Stomach (tissue), 19 donors: ENCODE measurements at regions of chr6 and their contacts with region 1.

Region 1: DNA sequence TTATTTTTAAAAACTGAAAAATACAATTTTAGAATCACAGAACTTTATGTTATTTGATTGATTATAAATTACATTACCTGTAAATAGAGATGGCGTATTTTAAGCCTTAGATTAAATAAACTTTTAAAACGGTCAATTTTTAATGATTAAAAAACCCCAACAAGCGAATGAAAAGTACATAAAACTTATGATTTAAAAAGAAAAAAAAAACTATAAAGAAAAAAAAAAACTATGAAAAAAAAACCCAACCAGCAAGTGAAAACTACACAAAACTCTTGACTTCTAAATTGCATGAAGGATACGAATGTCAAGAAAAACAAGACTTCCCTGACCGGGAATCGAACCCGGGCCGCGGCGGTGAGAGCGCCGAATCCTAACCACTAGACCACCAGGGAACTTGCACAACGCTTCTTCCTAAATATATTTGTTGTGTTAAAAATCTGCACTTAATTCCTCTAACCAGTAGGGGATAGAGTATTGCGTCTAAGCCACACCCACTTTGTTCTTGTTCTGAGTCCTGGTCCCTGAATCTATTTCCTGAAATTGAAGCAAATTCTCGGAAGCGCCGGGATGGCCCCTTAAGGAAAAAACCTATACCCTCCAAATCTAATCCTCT is 10.7 kb upstream of the NCOA7 start:
- DNase-seq: peak; percentile 85 to 96
- H3K4me3 ChIP-seq: peak overlapping the region; percentile 42 to 59 (median 57)
- H3K27ac ChIP-seq: peak overlapping the region; percentile 90 to 97 (median 95)
- H3K4me1 ChIP-seq: peaks cover 0 to 14% (median 4%) of the 10 kb centered on the region in 4 donors
- H3K27me3 ChIP-seq: no peaks in the 10 kb centered on the region
- CTCF ChIP-seq: peak in 4 of 7 experiments; percentile 19 to 53 (median 44)
- EP300 ChIP-seq: no peak
- POLR2A ChIP-seq: no peak

Region 2: GRCh38 chr6:125611573-125612344 is 168.3 kb before region 1 on chr6:
- intact Hi-C with region 1: no loop called
- DNase-seq: peak in 1 of 2 donors; percentile 60
- H3K4me3 ChIP-seq: peak overlapping the region in 3 of 4 donors; percentile 3 to 12 (median 11)
- H3K27ac ChIP-seq: no peak overlapping the region
- H3K4me1 ChIP-seq: peaks cover 6 to 17% (median 11%) of the 10 kb centered on the region in 4 donors
- H3K27me3 ChIP-seq: no peaks in the 10 kb centered on the region
- CTCF ChIP-seq: no peak
- EP300 ChIP-seq: no peak
- POLR2A ChIP-seq: no peak

Region 3: DNA sequence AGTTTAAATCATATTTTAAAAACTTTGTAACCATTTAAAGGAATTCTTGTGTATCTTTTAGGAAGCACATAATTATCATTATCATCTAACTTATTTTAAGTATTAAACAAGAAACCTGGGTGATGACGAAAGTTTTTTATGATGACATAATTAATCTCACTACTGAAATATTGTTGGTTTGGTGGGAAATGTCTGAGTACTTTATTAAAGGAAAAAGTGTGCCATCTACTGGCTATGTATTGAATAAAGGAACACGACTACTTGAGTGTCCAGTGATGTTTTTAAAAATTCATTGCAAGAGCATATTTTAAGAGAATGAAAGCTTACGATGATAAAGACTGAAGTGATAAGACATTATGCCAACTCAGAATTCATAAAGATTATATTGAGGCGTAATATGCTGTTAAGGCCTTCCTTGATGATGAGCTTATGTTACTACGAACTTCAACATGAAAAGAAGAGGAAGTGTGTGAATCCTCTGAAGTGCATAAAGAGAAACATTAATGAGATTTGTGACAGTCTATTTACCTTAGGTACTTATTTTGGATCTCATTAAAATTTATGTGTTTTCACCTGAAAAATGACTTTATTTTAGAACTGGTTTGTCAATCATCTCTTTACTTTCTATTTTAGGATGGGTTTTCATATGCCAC is 194.3 kb after region 1 on chr6:
- intact Hi-C with region 1: loop called (anchors 10 kb)
- DNase-seq: peak in 1 of 2 donors; percentile 74
- H3K4me3 ChIP-seq: no peak overlapping the region
- H3K27ac ChIP-seq: no peak overlapping the region
- H3K4me1 ChIP-seq: peaks cover 0 to 9% (median 3%) of the 10 kb centered on the region in 4 donors
- H3K27me3 ChIP-seq: no peaks in the 10 kb centered on the region
- CTCF ChIP-seq: peak in 4 of 7 experiments; percentile 22 to 56 (median 50)
- EP300 ChIP-seq: no peak
- POLR2A ChIP-seq: no peak

Region 4: GRCh38 chr6:126826166-126826714 is 1046.2 kb after region 1 on chr6:
- intact Hi-C with region 1: no loop called
- DNase-seq: no peak
- H3K4me3 ChIP-seq: no peak overlapping the region
- H3K27ac ChIP-seq: no peak overlapping the region
- H3K4me1 ChIP-seq: no peaks in the 10 kb centered on the region
- H3K27me3 ChIP-seq: no peaks in the 10 kb centered on the region
- CTCF ChIP-seq: no peak
- EP300 ChIP-seq: no peak
- POLR2A ChIP-seq: no peak